H1 (cell line): ENCODE measurements at regions of chr15 and their contacts with region 1.

Region 1: DNA sequence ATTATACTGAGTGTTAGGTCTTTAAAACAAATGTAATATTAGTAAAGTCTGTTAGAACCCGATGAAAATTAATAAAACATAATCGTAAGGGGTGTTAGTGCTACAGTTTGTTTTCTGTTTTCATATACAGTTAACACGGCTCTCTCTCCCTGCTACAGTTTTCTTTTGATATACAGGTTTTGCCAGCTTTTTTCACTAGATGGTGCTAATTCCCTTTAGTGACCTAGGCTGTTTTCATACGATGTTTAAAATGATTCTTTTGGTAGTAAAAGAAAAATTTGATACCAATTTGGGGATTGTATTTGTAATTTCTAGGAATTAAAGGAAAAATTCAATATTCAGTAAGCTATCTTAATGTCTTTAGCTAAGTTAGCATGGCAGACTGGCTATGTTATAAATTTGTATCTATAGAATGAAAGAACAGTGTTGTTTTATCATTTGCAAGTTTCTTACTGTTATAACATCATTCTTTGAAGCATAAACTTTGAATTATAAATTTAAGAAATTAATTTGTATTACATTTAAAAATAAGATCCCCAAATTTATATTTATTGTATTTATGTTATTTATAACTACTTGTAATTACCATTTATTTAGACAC is 11.5 kb downstream of the APH1B start:
- DNase-seq: no peak
- H3K4me3 ChIP-seq: no peak overlapping the region
- H3K27ac ChIP-seq: no peak overlapping the region
- H3K4me1 ChIP-seq: no peaks in the 10 kb centered on the region
- H3K27me3 ChIP-seq: no peaks in the 10 kb centered on the region
- CTCF ChIP-seq: peak in 2 of 3 experiments; percentile 42 to 62; a peak in 2 of 4 replicates
- EP300 ChIP-seq: no peak
- POLR2A ChIP-seq: no peak
- RAD21 ChIP-seq: peak; percentile 84 to 87

Region 2: GRCh38 chr15:63301088-63301487 is 12.2 kb after region 1 on chr15:
- CTCF ChIA-PET with region 1: interaction called, 10 read pairs
- POLR2A ChIA-PET with region 1: interaction called, 3 read pairs
- DNase-seq: no peak
- H3K4me3 ChIP-seq: no peak overlapping the region
- H3K27ac ChIP-seq: no peak overlapping the region
- H3K4me1 ChIP-seq: no peaks in the 10 kb centered on the region; a peak in 1 of 7 replicates
- H3K27me3 ChIP-seq: no peaks in the 10 kb centered on the region
- CTCF ChIP-seq: no peak
- EP300 ChIP-seq: no peak
- POLR2A ChIP-seq: no peak
- RAD21 ChIP-seq: no peak

Region 3: DNA sequence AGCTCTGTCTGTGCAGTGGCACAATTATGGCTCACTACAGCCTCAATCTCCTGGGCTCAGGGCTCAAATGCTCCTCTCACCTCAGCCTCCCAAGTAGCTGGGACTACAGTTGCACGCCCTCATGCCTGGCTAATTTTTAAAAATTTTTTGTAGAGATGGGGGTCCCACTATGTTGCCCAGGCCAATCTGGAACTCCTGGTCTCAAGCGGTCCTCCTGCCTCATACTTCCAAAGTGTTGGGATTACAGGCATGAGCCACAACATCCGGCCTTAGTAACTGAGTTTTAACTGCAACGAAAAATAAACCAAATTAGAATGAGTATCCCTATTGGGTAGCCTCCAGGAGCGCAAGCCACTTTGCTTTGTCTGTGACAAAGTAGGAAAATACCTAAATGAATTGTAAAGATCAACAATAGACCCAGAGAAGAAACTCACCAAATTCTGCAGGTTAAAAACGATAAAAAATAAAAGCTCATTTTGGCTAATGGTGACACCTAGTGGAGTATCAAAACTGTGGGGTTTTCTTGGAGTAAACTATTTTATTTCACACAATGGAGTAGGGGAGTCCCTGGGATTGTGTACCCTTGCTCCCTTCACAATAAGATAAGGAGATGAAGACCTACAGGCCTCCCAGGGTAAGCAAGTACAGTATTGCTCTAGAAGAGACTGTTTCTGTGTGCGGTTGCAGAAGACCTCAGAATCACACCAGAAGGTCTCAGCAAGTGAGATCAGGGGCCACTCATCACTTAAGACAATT is 113.8 kb after region 1 on chr15:
- CTCF ChIA-PET with region 1: interaction called, 25 read pairs
- POLR2A ChIA-PET with region 1: no interaction called
- DNase-seq: peak in 1 of 2 experiments; percentile 53
- H3K4me3 ChIP-seq: no peak overlapping the region
- H3K27ac ChIP-seq: no peak overlapping the region
- H3K4me1 ChIP-seq: no peaks in the 10 kb centered on the region
- H3K27me3 ChIP-seq: no peaks in the 10 kb centered on the region; a peak in 1 of 7 replicates
- CTCF ChIP-seq: peak in 2 of 3 experiments; percentile 50 to 54; a peak in 2 of 4 replicates
- EP300 ChIP-seq: no peak
- POLR2A ChIP-seq: no peak
- RAD21 ChIP-seq: peak; percentile 75 to 82

Region 4: DNA sequence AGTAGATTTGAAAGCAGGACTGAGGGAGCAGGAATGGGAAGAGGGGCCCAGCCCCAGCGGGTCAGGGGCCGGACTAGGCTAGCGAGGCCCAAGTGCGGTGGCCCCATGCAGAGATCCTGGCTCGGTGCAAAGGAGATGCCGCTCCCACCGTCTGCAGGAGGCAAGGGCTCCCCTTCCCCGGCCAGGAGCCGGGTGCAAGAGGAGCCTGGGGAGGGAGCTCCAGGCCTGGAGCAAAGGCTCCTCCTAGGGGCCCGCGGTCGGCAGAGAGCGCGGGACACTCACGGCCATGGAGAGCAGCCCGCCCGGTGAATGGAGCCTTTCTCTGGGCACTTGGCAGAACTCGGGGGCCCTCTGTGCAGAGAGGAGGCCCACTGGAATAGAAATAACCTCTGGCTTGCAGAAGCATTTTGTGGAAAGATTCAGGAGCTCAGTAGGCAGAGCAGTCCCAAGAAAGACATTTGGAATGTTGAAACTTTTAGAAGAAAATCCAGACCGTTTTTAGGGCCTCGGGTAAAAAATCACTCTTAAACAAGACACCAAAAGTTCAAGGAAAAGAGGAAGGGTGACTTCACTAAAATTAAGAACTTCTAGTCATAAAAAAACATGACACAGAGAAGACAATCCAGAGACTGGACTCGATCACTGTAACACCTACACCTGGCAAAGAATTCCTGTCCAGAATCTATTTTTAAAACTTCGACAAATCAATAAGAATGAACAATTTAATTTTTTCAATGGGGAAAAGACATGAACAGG is 172.5 kb after region 1 on chr15:
- CTCF ChIA-PET with region 1: interaction called, 15 read pairs
- POLR2A ChIA-PET with region 1: interaction called, 3 read pairs
- DNase-seq: peak; percentile 56 to 70
- H3K4me3 ChIP-seq: peak overlapping the region in 3 of 4 experiments; percentile 0 to 33 (median 5); a peak in 3 of 8 replicates
- H3K27ac ChIP-seq: no peak overlapping the region
- H3K4me1 ChIP-seq: no peaks in the 10 kb centered on the region; a peak in 1 of 7 replicates
- H3K27me3 ChIP-seq: peaks cover 0 to 8% (median 3%) of the 10 kb centered on the region in 4 experiments; a peak in 3 of 7 replicates
- CTCF ChIP-seq: peak; percentile 44 to 58 (median 55)
- EP300 ChIP-seq: no peak
- POLR2A ChIP-seq: no peak
- RAD21 ChIP-seq: peak; percentile 62 to 86